HEK293T (cell line): ENCODE measurements at regions of chr17 and their contacts with region 1.

Region 1: GRCh38 chr17:1628856-1629646 is 417 bp upstream of the SLC43A2 start:
- DNase-seq: peak; percentile 95

Region 2: GRCh38 chr17:1573916-1574696 is 54.9 kb before region 1 on chr17:
- CTCF ChIA-PET with region 1: interaction called, 43 read pairs
- POLR2A ChIA-PET with region 1: interaction called, 7 read pairs
- DNase-seq: peak; percentile 92

Region 3: DNA sequence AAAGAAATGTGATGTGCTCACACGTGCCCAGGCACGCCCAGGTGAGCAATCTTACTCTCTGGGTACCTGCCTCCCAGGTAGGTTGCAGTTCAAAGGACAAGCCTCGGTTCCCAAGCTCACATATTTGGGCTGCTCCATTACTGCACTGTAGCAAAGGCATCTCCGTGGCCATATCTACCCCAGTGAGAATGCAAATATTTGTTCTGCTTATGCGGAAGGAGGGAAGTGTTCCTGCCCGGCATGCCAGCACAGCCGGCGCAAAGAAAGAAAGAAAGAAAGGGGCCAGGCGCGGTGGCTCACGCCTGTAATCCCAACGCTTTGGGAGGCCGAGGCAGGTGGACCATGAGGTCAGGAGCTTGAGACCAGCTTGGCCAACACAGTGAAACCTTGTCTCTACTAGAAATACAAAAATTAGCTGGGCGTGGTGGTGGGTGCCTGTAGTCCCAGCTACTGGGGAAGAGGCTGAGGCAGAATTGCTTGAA is 31.1 kb before region 1 on chr17:
- CTCF ChIA-PET with region 1: no interaction called
- POLR2A ChIA-PET with region 1: no interaction called
- DNase-seq: no peak

Region 4: GRCh38 chr17:1617620-1618174 is 11.4 kb before region 1 on chr17:
- CTCF ChIA-PET with region 1: interaction called, 4 read pairs
- POLR2A ChIA-PET with region 1: interaction called, 18 read pairs
- DNase-seq: peak; percentile 41

Region 5: DNA sequence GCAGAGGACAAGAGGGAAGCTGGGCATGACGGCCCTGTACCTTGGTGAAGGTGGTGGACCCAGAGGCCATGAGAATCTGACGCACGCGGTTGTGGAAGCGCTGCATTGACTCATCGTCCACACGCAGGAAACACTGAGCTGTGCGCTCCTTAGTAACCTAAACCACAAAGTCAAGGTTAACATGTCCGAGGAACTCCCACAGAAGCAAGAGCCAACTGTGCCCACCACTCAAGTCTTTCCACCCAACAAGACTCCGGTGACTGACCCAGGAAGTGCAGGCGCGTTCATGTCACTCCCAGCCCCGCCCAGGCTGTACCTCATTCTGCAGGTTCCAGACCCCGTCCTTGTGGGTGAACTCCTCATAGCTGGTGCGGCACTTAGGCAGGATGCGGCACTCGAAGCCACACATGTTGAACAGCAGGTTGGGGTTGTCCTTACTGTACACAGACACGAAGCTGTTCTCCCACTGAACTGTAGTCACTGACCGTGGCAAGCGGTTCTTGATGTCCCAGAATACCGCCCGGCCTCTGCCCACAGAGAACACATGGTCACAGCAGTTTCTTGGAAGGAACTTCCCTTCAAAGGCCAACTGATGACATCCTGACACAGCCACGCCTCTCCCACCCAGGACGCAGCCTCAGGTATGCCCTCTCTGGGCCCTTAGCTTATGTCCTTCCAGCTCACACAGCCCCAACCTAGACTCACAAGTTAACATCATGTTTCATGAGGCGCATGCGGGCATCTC is 44.2 kb after region 1 on chr17:
- CTCF ChIA-PET with region 1: no interaction called
- POLR2A ChIA-PET with region 1: no interaction called
- DNase-seq: no peak

Region 6: DNA sequence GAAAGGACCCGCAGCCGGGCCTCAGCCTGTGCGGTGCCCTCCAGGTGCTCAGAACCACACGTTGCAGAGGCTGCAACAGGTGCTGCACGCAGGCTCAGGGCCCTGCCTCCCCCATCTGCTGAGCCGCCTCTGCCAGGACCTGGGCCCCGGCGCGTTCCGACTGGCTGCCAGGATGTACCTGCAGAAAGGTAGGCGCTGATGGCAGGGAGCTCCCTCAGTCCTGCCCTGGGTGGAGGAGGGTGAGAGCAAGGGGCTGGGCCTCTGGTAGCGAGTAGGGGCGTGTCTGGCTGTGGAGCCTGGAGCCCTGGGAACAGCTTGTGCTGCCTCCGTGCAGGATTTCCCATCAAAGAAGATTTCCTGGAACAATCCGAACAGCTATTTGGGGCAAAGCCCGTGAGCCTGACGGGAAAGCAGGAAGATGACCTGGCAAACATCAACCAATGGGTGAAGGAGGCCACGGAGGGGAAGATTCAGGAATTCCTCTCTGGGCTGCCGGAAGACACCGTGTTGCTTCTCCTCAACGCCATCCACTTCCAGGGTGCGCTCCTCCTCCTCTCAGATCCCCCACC is 118.0 kb after region 1 on chr17:
- CTCF ChIA-PET with region 1: no interaction called
- POLR2A ChIA-PET with region 1: no interaction called
- DNase-seq: no peak

Region 7: GRCh38 chr17:1829592-1830257 is 200.7 kb after region 1 on chr17 and contains the starts of genes RPA1 and SMYD4:
- CTCF ChIA-PET with region 1: no interaction called
- POLR2A ChIA-PET with region 1: no interaction called
- DNase-seq: peak; percentile 97